ENCODE measurements at regions of chr6 and their contacts with region 1.

Region 1: DNA sequence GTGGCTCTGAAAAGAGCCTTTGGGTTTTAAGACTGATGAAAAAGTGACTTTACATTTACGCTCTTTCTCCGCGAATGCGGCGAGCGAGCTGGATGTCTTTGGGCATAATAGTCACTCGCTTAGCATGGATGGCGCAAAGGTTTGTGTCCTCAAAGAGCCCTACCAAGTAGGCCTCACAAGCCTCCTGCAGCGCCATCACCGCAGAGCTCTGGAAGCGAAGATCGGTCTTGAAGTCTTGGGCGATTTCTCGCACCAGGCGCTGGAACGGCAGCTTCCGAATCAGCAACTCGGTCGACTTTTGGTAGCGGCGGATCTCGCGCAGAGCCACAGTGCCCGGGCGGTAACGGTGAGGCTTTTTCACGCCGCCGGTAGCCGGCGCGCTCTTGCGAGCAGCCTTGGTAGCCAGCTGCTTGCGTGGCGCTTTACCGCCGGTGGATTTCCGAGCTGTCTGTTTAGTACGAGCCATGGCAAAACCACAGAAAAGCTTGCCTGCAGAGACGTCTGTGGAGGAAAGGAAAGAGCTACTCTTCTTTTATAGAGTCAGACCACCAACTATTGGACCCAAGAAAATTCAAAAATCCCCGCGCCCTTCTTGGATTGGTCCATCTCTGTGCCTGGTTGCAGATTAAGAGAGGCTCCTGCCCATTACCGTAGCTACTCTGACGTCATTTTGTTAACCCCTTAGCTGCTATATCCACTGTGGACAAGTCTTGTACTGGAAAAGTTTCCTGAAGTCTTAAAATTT is 55.5 kb upstream of the HFE start:
- DNase-seq: peak; percentile 97
- ATAC-seq: peak; percentile 70
- H3K4me3 ChIP-seq: peak overlapping the region; percentile 75
- H3K27ac ChIP-seq: peak overlapping the region; percentile 95
- H3K4me1 ChIP-seq: peaks cover 9% of the 10 kb centered on the region; the same call in 1 of the 2 replicates
- H3K27me3 ChIP-seq: no peaks in the 10 kb centered on the region
- CTCF ChIP-seq: 0 out of 6 replicates have a peak, but pooled peaks of 1 of the 3 experiments have one; percentile 11
- EP300 ChIP-seq: peak in 1 of 2 experiments; percentile 10; a peak in 1 of 4 replicates
- POLR2A ChIP-seq: peak; percentile 96
- RAD21 ChIP-seq: no peak

Region 2: GRCh38 chr6:26097268-26097875 is 65.6 kb after region 1 on chr6:
- CTCF ChIA-PET with region 1: interaction called, 22 read pairs
- POLR2A ChIA-PET with region 1: no interaction called
- RAD21 ChIA-PET with region 1: interaction called, 17 read pairs
- SMC1A ChIA-PET with region 1: interaction called, 11 read pairs
- in situ Hi-C with region 1: no loop called
- intact Hi-C with region 1: no loop called
- DNase-seq: no peak
- ATAC-seq: peak; percentile 92
- H3K4me3 ChIP-seq: no peak overlapping the region
- H3K27ac ChIP-seq: no peak overlapping the region
- H3K4me1 ChIP-seq: peaks cover 4% of the 10 kb centered on the region
- H3K27me3 ChIP-seq: no peaks in the 10 kb centered on the region
- CTCF ChIP-seq: peak; percentile 54 to 82 (median 65); a peak in 5 of 6 replicates
- EP300 ChIP-seq: no peak
- POLR2A ChIP-seq: no peak
- RAD21 ChIP-seq: peak; percentile 96

Region 3: DNA sequence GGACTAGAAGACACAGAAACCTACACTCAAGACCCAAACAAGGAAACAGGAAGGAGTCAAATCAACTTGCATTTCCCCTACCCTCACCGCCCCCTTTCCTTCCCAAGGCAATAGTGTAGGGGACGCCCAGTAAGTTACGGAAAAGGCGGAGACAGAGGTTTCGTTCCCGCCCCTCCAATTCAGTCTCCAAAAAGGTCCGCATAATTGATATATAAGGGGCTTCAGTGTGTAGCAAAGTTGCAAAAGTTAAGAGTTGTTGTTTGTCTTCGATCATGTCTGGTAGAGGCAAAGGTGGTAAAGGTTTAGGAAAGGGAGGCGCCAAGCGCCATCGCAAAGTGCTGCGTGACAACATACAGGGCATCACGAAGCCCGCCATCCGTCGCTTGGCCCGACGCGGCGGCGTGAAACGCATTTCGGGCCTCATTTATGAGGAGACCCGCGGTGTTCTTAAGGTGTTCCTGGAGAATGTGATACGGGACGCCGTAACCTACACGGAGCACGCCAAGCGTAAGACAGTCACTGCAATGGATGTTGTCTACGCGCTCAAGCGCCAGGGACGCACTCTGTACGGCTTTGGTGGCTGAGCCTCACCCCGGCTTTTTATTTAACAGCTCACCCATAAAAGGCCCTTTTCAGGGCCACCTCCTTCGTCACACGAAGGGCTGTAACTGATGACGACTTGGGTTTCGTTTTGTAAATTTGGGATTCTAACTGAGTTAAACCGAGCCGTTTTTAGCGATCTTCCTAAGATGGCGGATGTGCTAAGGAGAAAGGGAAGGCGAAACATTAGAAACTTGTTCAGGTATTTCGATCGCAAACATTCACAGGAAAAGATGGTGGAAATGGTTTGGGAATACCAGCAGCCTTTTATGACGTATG is 208.6 kb after region 1 on chr6:
- CTCF ChIA-PET with region 1: no interaction called
- POLR2A ChIA-PET with region 1: no interaction called
- RAD21 ChIA-PET with region 1: no interaction called
- SMC1A ChIA-PET with region 1: no interaction called
- in situ Hi-C with region 1: no loop called
- intact Hi-C with region 1: loop called (anchors 2 kb)
- DNase-seq: peak; percentile 89
- ATAC-seq: peak; percentile 84
- H3K4me3 ChIP-seq: peak overlapping the region; percentile 49
- H3K27ac ChIP-seq: peak overlapping the region; percentile 95
- H3K4me1 ChIP-seq: peaks cover 14% of the 10 kb centered on the region
- H3K27me3 ChIP-seq: no peaks in the 10 kb centered on the region
- CTCF ChIP-seq: no peak
- EP300 ChIP-seq: no peak; a peak in 1 of 4 replicates
- POLR2A ChIP-seq: peak; percentile 96
- RAD21 ChIP-seq: no peak

Region 4: GRCh38 chr6:27146706-27147505 is 1115.1 kb after region 1 on chr6:
- CTCF ChIA-PET with region 1: no interaction called
- POLR2A ChIA-PET with region 1: interaction called, 3 read pairs
- RAD21 ChIA-PET with region 1: no interaction called
- SMC1A ChIA-PET with region 1: no interaction called
- in situ Hi-C with region 1: loop called (anchors 5 kb)
- intact Hi-C with region 1: no loop called
- DNase-seq: peak; percentile 100
- ATAC-seq: peak; percentile 73
- H3K4me3 ChIP-seq: peak overlapping the region; percentile 92
- H3K27ac ChIP-seq: peak overlapping the region; percentile 98
- H3K4me1 ChIP-seq: peaks cover 10% of the 10 kb centered on the region; the same call in 1 of the 2 replicates
- H3K27me3 ChIP-seq: no peaks in the 10 kb centered on the region
- CTCF ChIP-seq: no peak
- EP300 ChIP-seq: no peak; a peak in 1 of 4 replicates
- POLR2A ChIP-seq: peak; percentile 88
- RAD21 ChIP-seq: no peak

Measured in GM12878 (cell line).